ENCODE measurements at regions of chr2 and their contacts with region 1.

Region 1: GRCh38 chr2:64222351-64222750 is 78.1 kb upstream of the PELI1 start:
- DNase-seq: no peak
- H3K4me3 ChIP-seq: no peak overlapping the region
- H3K27ac ChIP-seq: no peak overlapping the region
- H3K4me1 ChIP-seq: peaks cover 55% of the 10 kb centered on the region
- CTCF ChIP-seq: no peak

Region 2: GRCh38 chr2:64143169-64144056 is 78.9 kb before region 1 on chr2:
- CTCF ChIA-PET with region 1: no interaction called
- POLR2A ChIA-PET with region 1: no interaction called
- intact Hi-C with region 1: no loop called
- DNase-seq: peak; percentile 60
- H3K4me3 ChIP-seq: peak overlapping the region; percentile 97
- H3K27ac ChIP-seq: peak overlapping the region; percentile 80
- H3K4me1 ChIP-seq: peaks cover 50% of the 10 kb centered on the region
- CTCF ChIP-seq: no peak

Region 3: DNA sequence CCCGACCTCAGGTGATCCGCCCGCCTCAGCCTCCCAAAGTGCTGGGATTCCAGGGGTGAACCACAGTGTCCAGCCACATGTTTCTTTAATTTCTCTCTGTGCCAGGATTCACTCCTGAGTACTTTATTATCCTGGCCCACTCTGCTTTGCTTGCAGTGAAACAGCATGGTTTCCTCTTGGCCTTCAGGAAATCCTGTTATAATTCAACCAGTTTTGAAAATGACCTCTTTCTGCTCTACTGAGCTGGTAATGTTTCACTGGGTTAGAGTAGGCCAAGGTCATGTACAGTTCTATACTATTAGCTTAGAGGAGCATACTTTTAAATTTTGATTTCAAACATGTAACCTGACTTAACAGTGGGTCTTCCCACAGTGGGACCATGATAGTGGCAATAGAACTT is 12.4 kb after region 1 on chr2:
- CTCF ChIA-PET with region 1: interaction called, 4 read pairs
- POLR2A ChIA-PET with region 1: interaction called, 10 read pairs
- intact Hi-C with region 1: no loop called
- DNase-seq: no peak
- H3K4me3 ChIP-seq: no peak overlapping the region
- H3K27ac ChIP-seq: no peak overlapping the region
- H3K4me1 ChIP-seq: peaks cover 11% of the 10 kb centered on the region
- CTCF ChIP-seq: no peak

Measured in OCI-LY7 (cell line).